ENCODE measurements at regions of chr15 and their contacts with region 1.

Region 1: GRCh38 chr15:65881766-65882434 is 12.6 kb downstream of the RAB11A start:
- DNase-seq: no peak
- ATAC-seq: peak; percentile 57
- H3K4me3 ChIP-seq: no peak overlapping the region
- H3K27ac ChIP-seq: no peak overlapping the region; the same call in 1 of the 2 replicates
- H3K4me1 ChIP-seq: peaks cover 11% of the 10 kb centered on the region
- H3K27me3 ChIP-seq: no peaks in the 10 kb centered on the region
- CTCF ChIP-seq: no peak
- EP300 ChIP-seq: no peak
- POLR2A ChIP-seq: no peak
- RAD21 ChIP-seq: no peak

Region 2: GRCh38 chr15:65896236-65896635 is 14.3 kb after region 1 on chr15:
- CTCF ChIA-PET with region 1: interaction called, 6 read pairs
- POLR2A ChIA-PET with region 1: interaction called, 10 read pairs
- RAD21 ChIA-PET with region 1: no interaction called
- SMC1A ChIA-PET with region 1: interaction called, 9 read pairs
- in situ Hi-C with region 1: no loop called
- intact Hi-C with region 1: no loop called
- DNase-seq: no peak
- ATAC-seq: no peak
- H3K4me3 ChIP-seq: no peak overlapping the region
- H3K27ac ChIP-seq: no peak overlapping the region
- H3K4me1 ChIP-seq: no peaks in the 10 kb centered on the region
- H3K27me3 ChIP-seq: no peaks in the 10 kb centered on the region
- CTCF ChIP-seq: no peak
- EP300 ChIP-seq: no peak
- POLR2A ChIP-seq: no peak
- RAD21 ChIP-seq: no peak